ENCODE measurements at regions of chr9 and their contacts with region 1.

Region 1: GRCh38 chr9:131661568-131662288 is 78.1 kb downstream of the RAPGEF1 start:
- DNase-seq: no peak
- ATAC-seq: no peak
- H3K4me3 ChIP-seq: no peak overlapping the region
- H3K27ac ChIP-seq: peak overlapping the region; percentile 1
- H3K4me1 ChIP-seq: peaks cover 44% of the 10 kb centered on the region
- H3K27me3 ChIP-seq: no peaks in the 10 kb centered on the region
- CTCF ChIP-seq: no peak

Region 2: GRCh38 chr9:131621551-131622358 is 40.0 kb before region 1 on chr9:
- intact Hi-C with region 1: loop called in 1 of 2 experiments (anchors 5 kb)
- DNase-seq: no peak
- ATAC-seq: peak in 2 of 4 donors; percentile 12 to 23
- H3K4me3 ChIP-seq: no peak overlapping the region
- H3K27ac ChIP-seq: no peak overlapping the region
- H3K4me1 ChIP-seq: peaks cover 20% of the 10 kb centered on the region
- H3K27me3 ChIP-seq: no peaks in the 10 kb centered on the region
- CTCF ChIP-seq: no peak